MCF 10A (cell line): ENCODE measurements at regions of chr19 and their contacts with region 1.

Region 1: DNA sequence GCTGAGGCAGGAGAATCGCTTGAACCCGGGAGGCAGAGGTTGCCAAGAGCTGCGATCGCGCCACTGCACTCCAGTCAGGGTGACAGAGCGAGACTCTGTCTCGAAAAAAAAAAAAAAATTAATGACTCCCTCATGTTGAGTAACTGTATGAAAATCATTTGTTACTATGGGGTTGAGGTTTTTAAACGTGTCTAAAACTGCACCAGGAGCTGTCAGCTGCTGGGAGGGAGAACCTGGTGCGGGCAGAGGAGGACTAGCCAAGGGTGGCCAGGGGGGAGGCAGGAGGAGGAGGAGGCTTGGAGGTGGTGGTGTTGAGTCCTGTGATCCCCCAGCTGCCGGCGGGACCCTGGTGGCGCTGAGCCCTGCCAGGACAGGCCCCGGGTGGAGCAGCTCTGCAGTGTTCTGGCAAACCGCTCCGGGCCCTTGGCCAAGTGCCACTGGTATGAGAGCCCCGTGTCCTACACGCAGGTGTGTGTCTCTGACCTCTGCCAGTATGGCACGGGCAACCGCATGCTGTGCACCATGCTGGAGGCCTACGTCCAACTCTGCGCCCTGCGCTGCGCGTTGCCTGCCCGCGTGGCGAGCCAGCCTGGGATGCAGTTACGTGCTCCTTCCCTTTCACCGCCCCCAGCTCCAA is 17.1 kb upstream of the FXYD3 start:
- DNase-seq: no peak
- H3K4me3 Mint-ChIP-seq: no peak overlapping the region
- H3K27ac Mint-ChIP-seq: no peak overlapping the region
- H3K4me1 Mint-ChIP-seq: peaks cover 13% of the 10 kb centered on the region
- H3K27me3 Mint-ChIP-seq: no peaks in the 10 kb centered on the region
- CTCF ChIP-seq: no peak

Region 2: DNA sequence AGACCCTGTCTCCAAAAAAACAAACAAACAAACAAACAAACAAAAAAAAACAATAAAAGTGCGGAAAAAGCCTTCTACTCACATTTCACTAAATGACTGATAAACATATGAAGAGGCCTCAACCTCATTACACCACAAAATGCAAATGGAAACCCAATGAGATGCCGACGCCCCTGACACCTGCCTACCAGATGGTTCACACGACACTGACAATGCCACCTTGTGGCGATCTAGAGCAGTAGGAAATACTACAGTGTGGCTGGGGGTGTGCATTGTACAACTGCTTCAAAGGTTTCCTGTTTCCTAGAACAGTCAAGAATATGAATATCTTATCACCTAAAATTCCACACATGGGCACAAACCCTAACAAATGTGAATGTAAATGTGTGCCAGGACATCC is 435.6 kb before region 1 on chr19:
- CTCF ChIA-PET with region 1: no interaction called
- POLR2A ChIA-PET with region 1: no interaction called
- intact Hi-C with region 1: no loop called
- DNase-seq: peak; percentile 49
- H3K4me3 Mint-ChIP-seq: no peak overlapping the region
- H3K27ac Mint-ChIP-seq: no peak overlapping the region
- H3K4me1 Mint-ChIP-seq: no peaks in the 10 kb centered on the region
- H3K27me3 Mint-ChIP-seq: no peaks in the 10 kb centered on the region
- CTCF ChIP-seq: no peak

Region 3: GRCh38 chr19:34943861-34944573 is 154.5 kb before region 1 on chr19:
- CTCF ChIA-PET with region 1: no interaction called
- POLR2A ChIA-PET with region 1: no interaction called
- intact Hi-C with region 1: no loop called
- DNase-seq: no peak
- H3K4me3 Mint-ChIP-seq: no peak overlapping the region
- H3K27ac Mint-ChIP-seq: no peak overlapping the region
- H3K4me1 Mint-ChIP-seq: no peaks in the 10 kb centered on the region
- H3K27me3 Mint-ChIP-seq: no peaks in the 10 kb centered on the region
- CTCF ChIP-seq: no peak

Region 4: DNA sequence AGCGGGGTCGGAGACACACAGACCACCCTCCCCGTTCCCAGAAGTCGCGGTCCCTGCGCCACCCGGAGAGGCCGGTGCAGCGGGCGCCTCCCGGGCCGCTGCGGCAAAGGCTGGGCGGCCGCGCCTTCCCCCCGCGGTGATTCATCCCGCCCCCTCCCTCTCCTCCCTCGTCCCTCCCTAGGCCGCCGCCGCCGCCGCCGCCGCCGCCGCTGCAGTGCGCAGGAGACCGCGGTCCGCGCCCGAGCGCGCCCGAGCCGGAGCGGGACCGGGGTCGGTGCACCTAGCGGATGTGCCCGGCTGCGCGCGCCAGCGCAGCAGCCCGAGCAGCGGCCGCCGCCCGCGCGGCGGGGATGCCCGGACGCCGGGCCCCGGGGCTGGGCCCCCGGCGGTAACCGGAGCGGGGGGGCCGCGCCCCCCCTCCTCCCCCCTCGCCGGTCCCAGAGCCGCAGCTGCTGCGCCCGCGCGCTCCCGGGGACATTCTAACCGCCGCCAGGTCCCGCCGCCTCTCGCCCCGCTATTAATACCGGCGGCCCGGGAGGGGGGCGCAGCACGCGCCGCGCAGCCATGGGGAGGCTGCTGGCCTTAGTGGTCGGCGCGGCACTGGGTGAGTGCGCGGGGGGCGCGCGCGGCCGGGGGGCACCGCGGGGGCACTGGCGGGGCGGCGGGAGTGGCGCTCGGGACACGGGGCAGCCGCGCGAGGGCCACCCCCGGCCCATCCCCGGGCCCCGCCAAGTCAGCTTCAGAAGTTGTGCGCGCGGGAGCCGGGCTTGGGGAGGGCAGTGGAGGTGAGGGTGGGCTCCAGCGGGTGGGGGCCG is 68.1 kb before region 1 on chr19 and contains the start of gene SCN1B:
- CTCF ChIA-PET with region 1: no interaction called
- POLR2A ChIA-PET with region 1: no interaction called
- intact Hi-C with region 1: no loop called
- DNase-seq: peak; percentile 74
- H3K4me3 Mint-ChIP-seq: peak within 1 kb of the TSS; percentile 52
- H3K27ac Mint-ChIP-seq: no peak within 1 kb of the TSS
- H3K4me1 Mint-ChIP-seq: peaks cover 6% of the 10 kb centered on the region
- H3K27me3 Mint-ChIP-seq: peaks cover 31% of the 10 kb centered on the region
- CTCF ChIP-seq: no peak
- total RNA-seq, gene SCN1B: 0.19 and 0.27 TPM in 2 replicates

Region 5: DNA sequence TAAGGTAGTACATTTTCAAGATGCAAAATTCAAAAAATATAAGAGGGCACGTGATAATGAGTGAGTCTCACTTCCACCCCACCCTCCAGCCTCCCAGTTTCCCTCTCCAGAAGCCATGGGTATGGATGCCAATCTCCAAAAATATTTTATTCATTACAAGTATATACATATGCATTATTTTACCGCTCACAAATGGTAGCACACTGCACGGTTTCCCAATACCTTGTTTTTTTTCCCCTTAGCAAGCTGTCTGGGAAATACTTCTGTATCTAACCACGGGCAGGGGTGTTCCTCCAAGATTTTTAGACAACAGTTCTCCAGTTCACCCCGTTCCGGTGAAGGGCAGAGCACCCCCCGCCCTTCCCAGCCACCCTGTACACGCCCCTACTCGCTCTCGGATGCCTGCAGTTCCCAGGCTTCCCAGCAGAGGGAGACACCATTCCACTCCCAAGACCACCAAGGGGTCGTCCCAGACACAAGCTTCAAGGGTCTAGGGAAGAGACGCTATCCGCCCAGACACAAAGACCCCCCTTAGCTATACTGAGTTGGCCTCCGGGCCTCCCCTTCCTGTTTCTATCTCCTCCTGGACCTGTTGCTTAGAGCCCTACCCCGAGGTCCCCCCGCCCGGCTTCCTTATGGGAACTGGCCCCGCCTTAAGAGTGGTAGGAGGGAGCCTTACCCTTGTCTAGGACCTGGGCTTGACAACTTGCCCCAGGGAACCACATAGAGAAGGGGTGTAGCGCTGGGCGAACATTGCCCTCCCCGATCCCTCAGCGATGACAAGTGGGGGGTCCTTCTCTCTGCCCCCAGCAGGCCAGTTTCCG is 16.0 kb after region 1 on chr19:
- CTCF ChIA-PET with region 1: interaction called, 25 read pairs
- POLR2A ChIA-PET with region 1: interaction called, 40 read pairs
- intact Hi-C with region 1: no loop called
- DNase-seq: peak; percentile 68
- H3K4me3 Mint-ChIP-seq: peak overlapping the region; percentile 53
- H3K27ac Mint-ChIP-seq: peak overlapping the region; percentile 73
- H3K4me1 Mint-ChIP-seq: peaks cover 50% of the 10 kb centered on the region
- H3K27me3 Mint-ChIP-seq: no peaks in the 10 kb centered on the region
- CTCF ChIP-seq: peak; percentile 98

Region 6: GRCh38 chr19:35124098-35125060 is 25.8 kb after region 1 on chr19:
- CTCF ChIA-PET with region 1: interaction called, 4 read pairs
- POLR2A ChIA-PET with region 1: interaction called, 12 read pairs
- intact Hi-C with region 1: no loop called
- DNase-seq: peak; percentile 97
- H3K4me3 Mint-ChIP-seq: peak overlapping the region; percentile 89
- H3K27ac Mint-ChIP-seq: peak overlapping the region; percentile 73
- H3K4me1 Mint-ChIP-seq: peaks cover 50% of the 10 kb centered on the region
- H3K27me3 Mint-ChIP-seq: no peaks in the 10 kb centered on the region
- CTCF ChIP-seq: no peak

Region 7: GRCh38 chr19:35222373-35223015 is 124.0 kb after region 1 on chr19:
- CTCF ChIA-PET with region 1: no interaction called
- POLR2A ChIA-PET with region 1: no interaction called
- intact Hi-C with region 1: no loop called
- DNase-seq: no peak
- H3K4me3 Mint-ChIP-seq: no peak overlapping the region
- H3K27ac Mint-ChIP-seq: peak overlapping the region; percentile 78
- H3K4me1 Mint-ChIP-seq: peaks cover 13% of the 10 kb centered on the region
- H3K27me3 Mint-ChIP-seq: no peaks in the 10 kb centered on the region
- CTCF ChIP-seq: no peak